ENCODE measurements at regions of chr4 and their contacts with region 1.

Region 1: DNA sequence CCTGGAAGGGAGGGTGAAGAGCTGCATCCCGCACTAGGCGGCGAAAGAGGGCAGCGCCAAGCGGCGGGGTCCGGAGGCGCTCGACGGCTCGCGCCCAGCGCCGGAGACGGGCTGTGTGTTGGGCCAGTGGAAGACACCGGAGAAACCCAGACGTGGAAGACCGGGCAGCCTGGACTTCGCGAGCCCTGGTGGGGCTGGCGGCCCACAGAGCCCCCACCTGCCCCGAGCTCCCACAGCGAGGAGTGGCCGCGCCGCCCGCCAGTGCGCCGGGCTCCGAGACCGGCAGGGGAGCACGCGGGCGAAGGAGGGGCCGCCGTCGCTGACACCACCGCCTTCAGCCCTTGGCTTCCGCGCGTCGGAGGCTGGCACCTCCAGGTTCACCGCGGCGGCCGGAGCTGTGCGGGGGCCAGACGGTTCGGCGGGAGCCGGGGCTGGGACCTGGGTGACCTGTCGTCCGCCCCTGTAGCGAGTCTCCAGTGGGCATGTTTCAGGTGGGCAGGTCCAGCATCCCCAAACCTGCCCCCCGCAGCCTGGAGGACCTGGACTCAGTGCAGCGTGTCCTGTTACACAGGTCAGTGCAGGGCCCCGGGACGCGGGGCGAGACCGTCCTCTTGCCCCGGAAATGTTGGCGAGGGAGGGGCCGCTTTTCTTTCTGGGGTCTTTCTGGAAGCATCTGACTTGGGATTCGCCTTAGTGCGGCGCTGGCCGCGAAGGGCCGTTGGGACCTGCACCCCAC is 9.7 kb upstream of the INTU start:
- DNase-seq: peak; percentile 64
- H3K4me3 ChIP-seq: peak overlapping the region; percentile 82 to 91 (median 85)
- H3K27ac ChIP-seq: peak overlapping the region; percentile 47
- H3K4me1 ChIP-seq: no peaks in the 10 kb centered on the region
- H3K27me3 ChIP-seq: no peaks in the 10 kb centered on the region
- CTCF ChIP-seq: peak; percentile 5 to 46

Region 2: DNA sequence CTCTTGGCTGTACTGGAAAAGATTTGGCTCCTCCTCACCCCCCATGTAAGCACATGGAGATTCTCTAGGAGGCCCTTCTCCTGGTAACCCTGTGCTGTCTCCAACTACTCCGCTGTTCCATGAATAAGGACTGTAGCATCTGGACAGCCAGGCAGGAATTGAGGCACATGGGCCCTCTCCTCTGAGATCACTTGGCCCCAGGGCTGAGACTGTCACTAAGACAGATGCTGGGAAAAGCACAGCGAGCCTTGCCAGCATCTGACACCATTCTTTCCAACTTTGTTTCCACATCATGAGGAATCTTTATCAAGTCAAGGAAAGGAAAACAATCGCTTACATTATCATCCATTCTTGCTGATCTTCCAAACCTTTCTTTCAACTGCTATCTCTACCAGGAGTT is 212.9 kb before region 1 on chr4:
- CTCF ChIA-PET with region 1: no interaction called
- dilution Hi-C with region 1: no loop called
- in situ Hi-C with region 1: no loop called
- intact Hi-C with region 1: no loop called
- DNase-seq: no peak
- H3K4me3 ChIP-seq: no peak overlapping the region
- H3K27ac ChIP-seq: no peak overlapping the region
- H3K4me1 ChIP-seq: no peaks in the 10 kb centered on the region
- H3K27me3 ChIP-seq: peaks cover under 1% of the 10 kb centered on the region
- CTCF ChIP-seq: no peak

Region 3: DNA sequence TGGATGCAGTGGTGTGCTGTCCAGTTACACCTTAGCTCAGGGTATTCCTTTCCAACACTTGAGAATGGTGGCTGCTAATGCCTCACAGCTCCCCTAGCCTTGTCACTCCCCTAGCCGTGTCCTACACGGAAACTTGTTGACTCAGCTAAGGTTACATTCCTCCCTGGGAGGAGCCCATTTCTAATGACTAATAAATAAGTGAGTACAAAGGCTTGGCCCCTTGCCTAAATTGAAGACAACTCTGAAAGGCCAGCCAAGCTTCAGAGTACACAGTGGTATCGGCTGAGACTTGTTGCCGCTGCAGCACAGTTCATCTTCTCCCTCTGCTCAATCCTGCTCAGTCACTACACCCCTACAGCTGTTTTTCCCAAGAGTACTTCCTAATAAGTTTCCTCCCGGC is 85.9 kb after region 1 on chr4:
- CTCF ChIA-PET with region 1: no interaction called
- dilution Hi-C with region 1: no loop called
- in situ Hi-C with region 1: no loop called
- intact Hi-C with region 1: loop called (anchors 1 kb)
- DNase-seq: peak; percentile 98
- H3K4me3 ChIP-seq: peak overlapping the region; percentile 26 to 45 (median 26)
- H3K27ac ChIP-seq: peak overlapping the region; percentile 95
- H3K4me1 ChIP-seq: peaks cover 5% of the 10 kb centered on the region
- H3K27me3 ChIP-seq: no peaks in the 10 kb centered on the region
- CTCF ChIP-seq: no peak

Region 4: GRCh38 chr4:127732613-127733328 is 109.7 kb after region 1 on chr4:
- CTCF ChIA-PET with region 1: no interaction called
- dilution Hi-C with region 1: no loop called
- in situ Hi-C with region 1: no loop called
- intact Hi-C with region 1: loop called (anchors 1 kb)
- DNase-seq: peak; percentile 27
- H3K4me3 ChIP-seq: no peak overlapping the region
- H3K27ac ChIP-seq: no peak overlapping the region
- H3K4me1 ChIP-seq: no peaks in the 10 kb centered on the region
- H3K27me3 ChIP-seq: no peaks in the 10 kb centered on the region
- CTCF ChIP-seq: peak; percentile 45 to 59